Aorta (tissue), 5 donors: ENCODE measurements at regions of chrX and their contacts with region 1.

Region 1: DNA sequence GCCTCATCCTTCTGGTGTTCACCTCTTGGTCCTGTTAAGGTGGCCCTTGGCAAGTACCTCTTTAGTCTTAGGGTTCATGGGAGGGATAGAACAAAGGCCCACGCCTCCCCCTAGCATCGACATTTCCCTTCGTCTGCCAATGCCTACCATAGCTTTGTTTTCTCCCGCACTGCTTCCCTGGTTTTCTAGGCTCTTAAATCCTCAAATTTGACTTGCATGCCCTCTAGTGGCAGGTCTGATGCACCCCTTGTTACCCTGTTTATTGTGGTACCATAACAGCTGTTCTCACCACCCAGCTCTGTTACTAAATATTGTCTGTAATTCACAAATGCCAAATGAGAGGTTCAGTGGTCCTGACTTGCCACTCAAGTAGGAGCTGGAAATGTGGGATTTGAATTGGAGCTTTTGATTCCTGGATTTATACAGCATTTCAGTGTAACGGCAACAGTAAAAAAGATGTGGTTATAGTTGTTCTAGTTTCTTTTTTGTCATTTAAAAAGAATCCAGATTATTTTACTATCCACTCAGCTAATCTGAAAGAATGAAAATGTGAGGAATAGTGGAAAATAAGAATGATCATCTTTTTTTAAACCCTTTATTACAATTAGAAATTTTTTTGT is 100.1 kb downstream of the REPS2 start:
- DNase-seq: peak in 1 of 2 donors; percentile 52
- ATAC-seq: peak; percentile 74
- H3K4me3 ChIP-seq: no peak overlapping the region
- H3K27ac ChIP-seq: no peak overlapping the region
- H3K4me1 ChIP-seq: no peaks in the 10 kb centered on the region
- H3K27me3 ChIP-seq: no peaks in the 10 kb centered on the region

Region 2: DNA sequence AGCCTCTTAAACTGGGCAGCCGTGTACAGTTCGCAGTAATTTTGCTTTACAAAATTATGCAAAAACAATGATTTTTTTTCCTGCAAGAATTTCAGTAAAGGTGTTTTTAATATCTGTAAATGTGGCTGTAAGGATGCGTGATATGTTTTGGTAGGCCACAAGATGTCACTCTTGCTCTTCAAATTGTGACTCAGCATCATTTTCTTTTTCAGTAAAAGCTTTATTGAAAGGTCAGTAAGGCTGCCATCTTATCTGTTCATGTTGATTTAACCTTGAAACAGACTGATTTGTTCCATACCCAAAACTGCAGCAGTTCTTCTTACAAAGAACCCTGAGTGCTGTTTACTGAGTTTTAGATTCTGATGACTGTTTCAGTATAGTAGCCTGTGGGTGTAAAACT is 220.4 kb before region 1 on chrX:
- intact Hi-C with region 1: loop called (anchors 5 kb)
- DNase-seq: no peak
- ATAC-seq: no peak
- H3K4me3 ChIP-seq: no peak overlapping the region
- H3K27ac ChIP-seq: no peak overlapping the region
- H3K4me1 ChIP-seq: peaks cover 0 to 5% of the 10 kb centered on the region in 2 donors
- H3K27me3 ChIP-seq: no peaks in the 10 kb centered on the region

Region 3: GRCh38 chrX:16882702-16883486 is 163.7 kb before region 1 on chrX:
- intact Hi-C with region 1: loop called in 1 of 2 experiments (anchors 1 kb)
- DNase-seq: peak; percentile 78 to 89
- ATAC-seq: peak; percentile 81
- H3K4me3 ChIP-seq: peak overlapping the region; percentile 28 to 64
- H3K27ac ChIP-seq: peak overlapping the region in 1 of 2 donors; percentile 63
- H3K4me1 ChIP-seq: peaks cover 0 to 2% of the 10 kb centered on the region in 2 donors
- H3K27me3 ChIP-seq: no peaks in the 10 kb centered on the region

Region 4: DNA sequence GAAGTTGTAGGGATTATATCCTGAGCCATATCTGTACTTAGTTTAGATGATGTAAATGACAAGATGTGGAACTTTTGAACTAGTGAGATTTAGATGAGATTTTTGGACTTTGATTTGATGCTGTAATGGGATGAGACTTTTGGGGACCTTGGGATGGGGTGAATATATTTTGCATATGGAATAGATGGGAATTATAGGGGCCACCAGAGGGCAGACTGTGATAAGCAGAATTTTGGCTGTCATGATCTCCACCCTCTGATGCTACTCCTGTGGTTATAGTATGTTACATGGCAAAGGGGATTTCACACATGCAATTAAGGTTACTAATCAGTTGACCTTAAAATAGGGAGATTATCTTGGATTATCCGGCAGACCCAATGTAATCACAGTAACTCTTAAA is 114.4 kb after region 1 on chrX:
- intact Hi-C with region 1: no loop called
- DNase-seq: no peak
- ATAC-seq: no peak
- H3K4me3 ChIP-seq: no peak overlapping the region
- H3K27ac ChIP-seq: no peak overlapping the region
- H3K4me1 ChIP-seq: peaks cover 0 to 2% of the 10 kb centered on the region in 2 donors
- H3K27me3 ChIP-seq: no peaks in the 10 kb centered on the region

Region 5: GRCh38 chrX:17192106-17192505 is 145.5 kb after region 1 on chrX:
- intact Hi-C with region 1: no loop called
- DNase-seq: no peak
- ATAC-seq: no peak
- H3K4me3 ChIP-seq: no peak overlapping the region
- H3K27ac ChIP-seq: no peak overlapping the region
- H3K4me1 ChIP-seq: no peaks in the 10 kb centered on the region
- H3K27me3 ChIP-seq: no peaks in the 10 kb centered on the region